HEK293T (cell line): ENCODE measurements at regions of chr1 and their contacts with region 1.

Region 1: GRCh38 chr1:193059268-193060225 is at the starts of genes RO60 and UCHL5:
- DNase-seq: peak; percentile 92

Region 2: GRCh38 chr1:192763746-192764145 is 295.8 kb before region 1 on chr1:
- CTCF ChIA-PET with region 1: no interaction called
- POLR2A ChIA-PET with region 1: no interaction called
- DNase-seq: no peak

Region 3: DNA sequence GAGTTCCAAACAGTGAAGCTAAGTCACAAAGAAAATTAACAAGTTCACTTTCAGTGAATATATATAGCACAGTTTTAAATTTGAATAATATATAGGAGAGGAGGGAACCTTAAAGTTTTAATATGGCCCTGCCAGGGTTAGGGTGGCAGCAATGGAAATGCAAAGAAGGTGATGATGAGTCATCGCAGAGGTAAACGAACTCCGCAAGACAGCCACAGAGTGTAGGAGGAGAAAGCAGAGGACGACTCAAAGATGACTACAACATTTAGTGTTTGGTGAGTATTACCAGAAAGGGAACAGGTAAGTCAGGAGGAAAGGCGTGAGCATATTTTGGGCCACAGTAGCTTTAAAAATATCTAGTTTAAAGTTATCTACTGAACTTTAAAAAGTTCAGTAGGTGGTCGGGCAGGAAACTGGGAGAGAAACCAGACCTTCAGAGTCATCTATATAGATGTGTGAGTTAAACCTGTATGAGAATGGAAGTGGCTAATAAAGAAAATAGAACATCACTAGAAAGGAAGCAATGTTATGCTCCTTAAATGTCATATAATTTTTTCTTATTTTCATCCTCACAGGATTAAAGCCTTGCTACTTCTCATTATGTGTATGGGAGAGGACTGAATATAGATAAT is 76.1 kb before region 1 on chr1:
- CTCF ChIA-PET with region 1: no interaction called
- POLR2A ChIA-PET with region 1: no interaction called
- DNase-seq: no peak

Region 4: GRCh38 chr1:193019442-193020026 is 40.0 kb before region 1 on chr1:
- CTCF ChIA-PET with region 1: interaction called, 11 read pairs
- POLR2A ChIA-PET with region 1: interaction called, 3 read pairs
- DNase-seq: no peak

Region 5: DNA sequence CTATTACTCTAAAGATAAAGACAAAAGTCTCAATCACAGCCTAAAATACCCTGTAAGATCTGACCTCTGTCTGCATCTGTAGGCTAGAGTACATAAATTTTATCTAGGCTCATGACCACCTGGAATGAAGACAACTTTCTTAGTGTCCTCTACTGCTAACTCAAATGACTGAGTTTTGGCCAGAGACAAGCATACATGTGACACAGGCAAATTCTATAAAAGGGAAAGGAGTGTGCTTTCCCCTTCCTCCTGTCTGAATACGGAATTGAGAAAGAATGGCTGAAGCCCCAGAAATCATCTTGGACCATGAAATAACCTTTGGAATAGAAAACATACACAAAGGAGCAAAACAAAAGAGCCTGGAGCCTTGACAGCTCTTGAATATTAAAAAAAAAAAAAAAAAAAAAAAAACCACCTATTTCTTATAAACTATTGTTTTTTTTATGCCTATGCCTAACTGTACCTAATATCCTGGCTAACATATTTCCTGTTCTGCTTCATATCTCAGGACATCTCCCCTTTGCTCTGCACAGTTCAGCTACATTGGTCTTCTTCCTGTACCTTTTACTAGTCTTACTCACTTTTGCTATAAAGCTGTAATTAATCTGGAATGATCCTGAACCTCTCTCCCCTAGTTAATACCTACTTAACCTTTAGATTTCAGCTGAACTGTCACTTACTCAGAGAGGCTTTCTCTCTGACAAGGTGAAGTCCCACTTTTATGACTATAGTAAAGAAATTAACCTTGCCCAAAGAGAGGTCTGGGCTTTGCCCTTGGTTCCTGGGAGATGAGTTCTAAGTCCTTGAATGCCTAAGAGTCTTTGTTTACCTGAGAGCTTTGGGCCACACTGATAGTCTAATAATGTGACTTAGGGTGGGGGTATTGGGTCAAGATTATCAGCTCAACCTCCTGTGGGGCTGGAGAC is 16.5 kb before region 1 on chr1:
- CTCF ChIA-PET with region 1: no interaction called
- POLR2A ChIA-PET with region 1: interaction called, 10 read pairs
- DNase-seq: no peak

Region 6: DNA sequence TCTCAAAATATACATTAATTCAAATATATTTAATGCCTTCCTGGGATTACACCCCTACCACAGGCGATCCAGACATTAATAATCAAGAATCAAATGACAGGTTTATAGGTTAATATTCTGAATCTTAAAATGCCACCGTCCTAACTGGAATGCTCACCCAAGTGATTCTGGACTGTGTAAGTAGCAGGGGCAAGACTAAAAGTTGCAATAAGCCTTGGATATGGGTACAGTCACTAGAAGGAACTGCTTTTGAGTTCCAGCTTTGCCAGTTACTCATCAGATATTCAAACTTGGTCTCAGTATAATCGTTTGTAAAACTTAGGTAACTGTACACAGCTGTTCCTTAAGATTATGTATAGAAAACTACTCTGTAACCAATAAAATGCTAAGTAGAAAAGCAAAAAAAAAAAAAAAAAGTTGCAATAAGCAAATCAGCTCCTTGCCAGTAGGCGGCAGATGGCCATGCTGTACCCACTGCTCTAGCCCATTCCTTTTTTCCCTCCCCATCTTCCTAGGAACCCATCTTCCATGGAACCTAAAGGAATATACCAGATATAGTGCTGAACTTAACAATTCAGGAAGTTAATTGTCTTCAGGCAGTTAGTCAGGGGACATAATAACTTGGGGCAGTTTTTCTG is 10.3 kb after region 1 on chr1:
- CTCF ChIA-PET with region 1: interaction called, 11 read pairs
- POLR2A ChIA-PET with region 1: interaction called, 19 read pairs
- DNase-seq: peak; percentile 68

Region 7: DNA sequence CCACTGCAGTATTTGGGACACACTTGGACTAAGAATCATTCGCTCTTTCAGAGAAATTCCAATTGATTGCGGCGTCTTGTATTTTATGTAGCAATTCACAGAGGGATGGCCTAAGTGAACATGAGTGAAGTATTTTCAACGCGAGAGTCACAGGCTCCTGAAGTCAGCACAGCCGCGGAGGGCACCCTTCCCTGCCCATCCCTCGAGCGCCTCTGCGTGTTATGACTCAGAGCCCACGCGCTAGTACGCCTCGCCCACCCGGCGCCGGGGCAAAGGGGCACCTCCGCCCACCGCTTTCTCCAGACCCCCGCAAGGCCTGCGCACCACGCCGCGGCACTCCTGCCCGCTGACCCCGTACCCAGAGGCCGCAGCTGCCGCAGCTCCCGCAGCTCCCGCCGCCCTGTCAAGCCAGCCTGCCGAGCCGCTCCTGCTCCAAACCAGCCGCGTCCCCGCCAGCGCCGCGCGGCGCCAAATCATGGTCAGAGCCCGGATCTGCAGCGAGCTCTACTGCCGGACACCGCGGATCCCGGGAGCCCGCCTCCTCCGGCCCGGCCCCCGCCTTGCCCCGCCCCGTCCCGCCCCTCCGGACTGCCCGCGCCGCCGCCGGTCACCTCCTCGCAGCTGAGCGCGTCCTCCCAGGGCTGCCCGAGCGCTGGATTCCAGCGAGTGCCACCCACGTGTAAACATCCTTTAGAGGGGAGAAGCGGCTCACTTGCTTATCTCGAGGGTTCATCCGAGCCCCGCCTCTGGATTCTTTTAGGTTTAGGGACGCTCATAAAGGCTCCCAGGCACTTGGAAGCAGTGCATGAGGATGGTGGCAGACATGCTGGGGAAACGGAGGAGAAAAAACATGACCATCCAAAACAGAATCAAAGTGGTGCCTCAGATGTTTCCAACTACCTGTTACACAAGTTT is 45.6 kb after region 1 on chr1 and contains the start of gene GLRX2:
- CTCF ChIA-PET with region 1: interaction called, 3 read pairs
- POLR2A ChIA-PET with region 1: interaction called, 40 read pairs
- DNase-seq: peak; percentile 91

Region 8: DNA sequence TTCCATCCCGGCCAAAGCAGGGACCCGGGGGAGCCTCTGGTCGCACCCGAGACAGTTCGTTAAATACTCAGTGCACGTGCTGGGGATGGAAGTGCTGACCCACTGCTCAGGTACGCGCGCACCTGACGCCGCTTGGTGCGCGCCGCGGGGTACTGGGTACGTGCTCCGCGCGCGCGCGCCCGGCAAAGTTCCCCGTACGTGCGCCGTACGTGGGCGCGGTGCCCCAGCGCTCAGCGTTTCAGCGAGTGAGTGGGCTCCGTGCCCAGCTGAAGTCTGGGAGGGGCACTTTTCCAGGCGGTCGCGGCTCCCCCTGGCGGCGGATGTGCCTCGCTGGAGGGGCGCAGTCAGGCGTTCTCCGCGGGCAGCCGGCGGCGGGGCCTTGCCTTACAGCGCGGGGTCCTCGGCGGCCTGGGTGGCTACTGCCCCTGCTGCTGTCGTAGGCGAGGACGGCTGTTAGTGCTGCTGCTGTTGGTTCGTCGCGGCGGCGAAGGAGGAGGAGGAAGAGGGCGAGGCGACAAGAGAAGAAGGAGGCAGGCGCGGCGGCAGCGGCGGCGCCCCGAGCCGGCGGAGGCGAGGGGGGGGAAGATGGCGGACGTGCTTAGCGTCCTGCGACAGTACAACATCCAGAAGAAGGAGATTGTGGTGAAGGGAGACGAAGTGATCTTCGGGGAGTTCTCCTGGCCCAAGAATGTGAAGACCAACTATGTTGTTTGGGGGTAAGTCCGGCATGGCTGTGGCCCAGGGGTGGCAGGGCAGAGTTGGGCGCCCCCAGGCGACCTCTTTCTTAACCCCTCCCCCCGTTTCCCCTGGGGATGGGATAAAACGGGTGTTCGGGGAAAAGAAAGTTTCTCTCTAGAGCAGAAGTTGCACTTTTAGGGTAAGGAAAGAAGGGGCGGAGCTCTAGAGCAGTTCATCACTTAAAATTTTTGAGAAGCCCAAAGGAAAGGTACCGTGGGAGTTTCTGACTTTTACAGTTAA is 62.4 kb after region 1 on chr1 and contains the start of gene CDC73:
- CTCF ChIA-PET with region 1: interaction called, 3 read pairs
- POLR2A ChIA-PET with region 1: interaction called, 12 read pairs
- DNase-seq: peak; percentile 93

Region 9: GRCh38 chr1:193264313-193265065 is 204.9 kb after region 1 on chr1:
- CTCF ChIA-PET with region 1: no interaction called
- POLR2A ChIA-PET with region 1: no interaction called
- DNase-seq: no peak